ENCODE measurements at regions of chr3 and their contacts with region 1.

Region 1: GRCh38 chr3:197711973-197712707 is 24.6 kb downstream of the RUBCN start:
- DNase-seq: peak; percentile 96
- H3K4me3 Mint-ChIP-seq: peak overlapping the region; percentile 40
- H3K27ac Mint-ChIP-seq: peak overlapping the region; percentile 85
- H3K4me1 Mint-ChIP-seq: peaks cover 35% of the 10 kb centered on the region
- H3K27me3 Mint-ChIP-seq: no peaks in the 10 kb centered on the region

Region 2: DNA sequence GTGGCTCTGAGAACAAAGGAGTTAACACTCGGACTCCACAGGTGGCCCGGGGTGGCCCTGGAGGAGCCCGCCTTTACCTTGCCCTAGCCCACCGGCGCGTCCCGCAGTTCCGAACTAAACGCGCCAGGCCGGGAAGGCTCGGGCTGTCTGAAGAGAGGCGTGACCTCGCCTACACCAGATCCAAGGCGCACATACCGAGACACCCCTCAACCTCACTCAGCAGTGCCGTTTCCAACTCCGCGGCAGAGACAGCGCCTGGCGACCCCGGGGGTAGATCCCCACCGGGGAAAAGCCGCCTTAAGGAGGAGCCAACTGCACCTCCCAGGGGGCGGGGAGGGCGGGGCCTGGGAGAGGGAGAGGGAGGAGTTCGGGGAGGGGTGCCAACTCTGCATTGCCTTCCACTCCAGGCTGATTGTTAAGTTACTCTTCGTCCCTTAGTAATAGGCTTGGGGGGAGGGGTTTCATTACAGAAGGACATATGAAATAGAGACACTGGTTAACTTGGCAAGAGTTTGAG is 413.7 kb before region 1 on chr3 and contains the start of gene DLG1:
- CTCF ChIA-PET with region 1: no interaction called
- intact Hi-C with region 1: loop called (anchors 5 kb)
- DNase-seq: peak; percentile 93
- H3K4me3 Mint-ChIP-seq: peak within 1 kb of the TSS; percentile 96
- H3K27ac Mint-ChIP-seq: peak within 1 kb of the TSS; percentile 86
- H3K4me1 Mint-ChIP-seq: peaks cover 16% of the 10 kb centered on the region
- H3K27me3 Mint-ChIP-seq: peaks cover 16% of the 10 kb centered on the region
- total RNA-seq, gene DLG1: 51.9 to 55.2 TPM

Region 3: GRCh38 chr3:197686899-197687298 is 25.2 kb before region 1 on chr3:
- CTCF ChIA-PET with region 1: no interaction called
- intact Hi-C with region 1: no loop called
- DNase-seq: no peak
- H3K4me3 Mint-ChIP-seq: no peak overlapping the region
- H3K27ac Mint-ChIP-seq: no peak overlapping the region
- H3K4me1 Mint-ChIP-seq: peaks cover 2% of the 10 kb centered on the region
- H3K27me3 Mint-ChIP-seq: no peaks in the 10 kb centered on the region

Region 4: GRCh38 chr3:197749601-197750395 is 37.7 kb after region 1 on chr3 and contains the start of gene FYTTD1:
- CTCF ChIA-PET with region 1: interaction called, 6 read pairs
- intact Hi-C with region 1: loop called (anchors 1 kb)
- DNase-seq: peak; percentile 81
- H3K4me3 Mint-ChIP-seq: peak within 1 kb of the TSS; percentile 93
- H3K27ac Mint-ChIP-seq: peak within 1 kb of the TSS; percentile 83
- H3K4me1 Mint-ChIP-seq: peaks cover 30% of the 10 kb centered on the region
- H3K27me3 Mint-ChIP-seq: no peaks in the 10 kb centered on the region
- total RNA-seq, gene FYTTD1: 25.1 to 27.6 TPM

Region 5: DNA sequence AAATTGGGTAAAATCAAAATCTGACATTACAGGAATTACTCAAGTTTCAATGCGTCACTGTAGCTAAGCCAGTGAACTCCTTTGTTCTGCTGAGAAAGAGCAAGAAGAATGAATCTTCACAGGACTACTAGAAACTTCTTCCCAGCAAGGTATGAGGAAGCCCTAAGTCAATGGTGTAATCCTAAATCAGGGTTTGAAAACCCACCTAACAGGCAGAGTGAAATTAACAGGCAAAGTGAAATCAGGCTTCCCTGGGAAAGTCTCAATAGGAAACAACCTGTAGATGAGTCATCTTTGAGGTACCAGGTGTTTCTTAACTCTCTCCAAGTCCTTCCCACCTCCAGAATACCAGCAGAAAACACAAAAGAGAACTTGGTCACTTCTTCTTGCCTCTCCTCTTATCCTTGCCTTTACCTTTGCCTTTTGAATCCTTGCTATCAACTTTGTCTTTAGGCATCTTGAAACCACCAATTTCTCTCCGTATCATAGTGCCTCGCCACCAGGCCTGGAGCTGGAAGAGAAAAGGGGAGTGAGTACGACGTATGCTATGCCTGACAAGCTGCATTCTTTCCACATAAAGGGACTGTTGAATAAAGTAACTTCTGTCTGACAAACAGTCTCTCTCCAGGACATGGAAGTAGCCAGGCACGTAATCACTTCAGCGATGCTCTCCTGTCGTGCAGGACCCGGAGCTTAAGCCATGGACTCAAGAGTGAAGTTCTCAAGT is 177.2 kb after region 1 on chr3:
- CTCF ChIA-PET with region 1: no interaction called
- intact Hi-C with region 1: loop called (anchors 1 kb)
- DNase-seq: no peak
- H3K4me3 Mint-ChIP-seq: no peak overlapping the region
- H3K27ac Mint-ChIP-seq: no peak overlapping the region
- H3K4me1 Mint-ChIP-seq: peaks cover 15% of the 10 kb centered on the region
- H3K27me3 Mint-ChIP-seq: no peaks in the 10 kb centered on the region

Region 6: DNA sequence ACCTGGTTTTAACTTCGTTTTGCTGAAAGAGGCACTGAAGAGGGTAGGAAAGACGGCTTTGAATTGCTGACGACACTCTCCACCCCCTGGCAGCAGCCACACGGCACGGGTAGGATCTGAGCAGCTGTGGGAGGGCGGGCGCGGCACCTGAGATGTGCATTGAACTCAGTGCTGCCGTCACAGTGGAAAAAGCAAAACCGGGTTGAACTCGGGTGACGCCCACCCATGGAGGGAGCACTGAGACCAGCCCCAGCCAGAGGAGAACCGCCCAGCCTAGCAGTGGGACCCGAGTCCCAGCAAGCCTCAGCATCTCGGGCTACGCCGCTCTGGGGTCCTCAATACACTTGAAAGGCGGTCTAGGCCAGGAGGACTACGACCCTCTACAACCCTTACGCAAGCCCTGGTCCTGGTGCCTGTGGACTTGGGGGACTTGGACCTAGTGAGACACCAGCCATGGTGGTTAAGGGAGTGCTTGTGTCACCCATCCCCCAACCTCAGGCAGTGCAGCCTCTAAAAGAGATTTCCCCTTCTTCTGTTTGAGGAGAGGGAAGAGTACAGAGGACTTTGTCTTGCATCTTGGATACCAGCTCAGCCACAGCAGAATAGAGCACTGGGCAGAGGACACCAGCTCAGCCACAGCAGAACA is 187.8 kb after region 1 on chr3:
- CTCF ChIA-PET with region 1: no interaction called
- intact Hi-C with region 1: no loop called
- DNase-seq: no peak
- H3K4me3 Mint-ChIP-seq: no peak overlapping the region
- H3K27ac Mint-ChIP-seq: no peak overlapping the region
- H3K4me1 Mint-ChIP-seq: peaks cover 2% of the 10 kb centered on the region
- H3K27me3 Mint-ChIP-seq: no peaks in the 10 kb centered on the region

Region 7: DNA sequence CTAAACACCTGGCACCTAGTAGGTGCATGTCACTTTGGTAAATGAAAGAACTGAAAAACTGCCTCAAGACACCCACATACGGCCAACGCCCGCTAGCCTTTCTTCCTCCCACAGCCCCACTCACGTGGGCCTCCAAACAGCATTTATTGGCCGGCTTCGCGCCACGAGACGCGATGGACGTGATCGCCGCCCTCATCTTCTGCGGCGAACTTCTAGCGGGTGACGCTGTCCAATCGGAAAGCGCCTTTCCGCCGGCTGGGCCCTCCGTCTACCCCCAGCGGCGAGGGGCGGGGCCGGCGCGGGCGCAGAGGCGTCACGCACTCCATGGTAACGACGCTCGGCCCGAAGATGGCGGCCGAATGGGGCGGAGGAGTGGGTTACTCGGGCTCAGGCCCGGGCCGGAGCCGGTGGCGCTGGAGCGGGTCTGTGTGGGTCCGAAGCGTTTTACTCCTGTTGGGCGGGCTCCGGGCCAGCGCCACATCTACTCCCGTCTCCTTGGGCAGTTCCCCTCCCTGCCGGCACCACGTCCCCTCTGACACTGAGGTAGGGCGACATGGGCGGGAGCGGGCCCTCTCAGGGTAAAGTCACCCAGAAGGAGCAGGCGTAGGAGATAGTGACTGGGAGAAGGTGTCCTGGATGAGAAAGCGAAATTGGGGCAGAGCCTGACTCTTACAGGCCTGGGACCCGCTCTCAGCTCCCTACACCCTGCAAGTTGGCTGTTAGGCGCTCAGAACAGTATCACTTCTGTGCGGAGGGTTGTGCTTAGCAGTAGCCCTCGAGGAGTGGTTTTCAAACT is 248.0 kb after region 1 on chr3 and contains the start of gene LMLN:
- CTCF ChIA-PET with region 1: no interaction called
- intact Hi-C with region 1: loop called (anchors 5 kb)
- DNase-seq: peak; percentile 95
- H3K4me3 Mint-ChIP-seq: peak within 1 kb of the TSS; percentile 85
- H3K27ac Mint-ChIP-seq: peak within 1 kb of the TSS; percentile 88
- H3K4me1 Mint-ChIP-seq: peaks cover 43% of the 10 kb centered on the region
- H3K27me3 Mint-ChIP-seq: no peaks in the 10 kb centered on the region
- total RNA-seq, gene LMLN: 2.1 to 2.2 TPM